ENCODE measurements at regions of chr2 and their contacts with region 1.

Region 1: DNA sequence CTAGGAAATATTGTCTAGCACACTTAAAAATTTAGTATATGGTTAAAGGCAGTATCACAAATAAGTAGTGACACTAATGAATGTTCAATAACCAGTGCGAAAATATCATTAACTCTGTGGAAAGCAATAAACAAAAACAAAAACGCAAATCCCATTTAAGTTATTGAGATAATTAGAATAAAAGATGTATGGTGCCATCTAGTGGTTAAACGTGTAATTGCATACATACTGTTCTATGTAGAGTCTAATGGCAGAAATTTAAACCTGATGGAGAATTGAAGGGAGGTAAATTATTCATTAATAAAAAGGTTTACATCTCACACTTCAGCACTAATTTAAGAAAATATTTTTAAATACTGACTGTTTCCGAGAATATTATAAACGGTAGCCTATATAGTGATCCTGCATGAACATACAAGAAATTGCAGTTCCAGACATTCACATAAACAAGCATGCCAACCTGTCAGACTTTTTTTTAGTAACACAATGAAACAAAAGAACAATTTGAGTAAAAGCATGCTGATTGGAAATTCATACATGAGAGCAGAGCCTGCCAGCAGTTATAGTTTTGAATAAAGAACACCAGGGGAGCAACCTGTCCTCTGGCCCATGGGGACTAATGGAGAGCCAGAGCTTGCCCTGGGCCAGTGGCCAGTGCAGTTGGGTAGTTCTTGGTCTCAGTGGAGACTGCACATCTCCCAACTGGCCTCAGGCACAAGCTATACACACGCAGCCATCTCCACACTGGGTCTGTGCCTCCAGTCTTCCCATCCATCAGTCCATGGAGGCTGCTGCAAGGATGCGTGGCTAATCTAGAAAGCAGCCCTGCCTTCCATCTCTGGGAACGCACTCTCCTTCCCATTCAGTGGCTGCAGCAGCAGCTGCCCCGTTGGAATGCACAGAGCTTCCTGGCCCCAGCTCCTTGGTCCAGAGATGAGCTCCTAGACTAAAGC is 28.0 kb downstream of the GCG start:
- DNase-seq: no peak
- H3K4me3 ChIP-seq: no peak overlapping the region
- H3K27me3 ChIP-seq: peaks cover 2% of the 10 kb centered on the region; the same call in 1 of the 2 replicates
- CTCF ChIP-seq: peak; percentile 51

Region 2: DNA sequence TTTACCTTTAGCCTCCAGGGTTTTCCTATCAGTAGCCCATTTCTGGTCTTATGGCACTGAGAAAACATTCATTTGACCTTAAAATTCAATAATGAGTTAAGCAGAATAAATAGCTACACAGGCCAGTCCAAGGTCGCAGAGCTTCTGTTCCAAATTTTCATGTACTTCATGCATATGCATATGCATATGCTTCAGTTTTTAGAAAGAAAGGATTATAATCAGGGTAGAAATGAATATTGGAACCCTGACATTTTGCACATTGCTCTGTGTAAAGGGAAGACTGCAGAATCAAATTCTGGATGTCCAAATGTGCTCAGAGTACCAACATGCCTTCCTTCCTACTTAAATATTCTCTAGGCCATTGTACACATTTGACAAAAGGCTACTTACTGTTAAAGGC is 154.9 kb before region 1 on chr2:
- CTCF ChIA-PET with region 1: no interaction called
- POLR2A ChIA-PET with region 1: no interaction called
- DNase-seq: no peak
- H3K4me3 ChIP-seq: no peak overlapping the region
- H3K27me3 ChIP-seq: no peaks in the 10 kb centered on the region
- CTCF ChIP-seq: no peak

Region 3: DNA sequence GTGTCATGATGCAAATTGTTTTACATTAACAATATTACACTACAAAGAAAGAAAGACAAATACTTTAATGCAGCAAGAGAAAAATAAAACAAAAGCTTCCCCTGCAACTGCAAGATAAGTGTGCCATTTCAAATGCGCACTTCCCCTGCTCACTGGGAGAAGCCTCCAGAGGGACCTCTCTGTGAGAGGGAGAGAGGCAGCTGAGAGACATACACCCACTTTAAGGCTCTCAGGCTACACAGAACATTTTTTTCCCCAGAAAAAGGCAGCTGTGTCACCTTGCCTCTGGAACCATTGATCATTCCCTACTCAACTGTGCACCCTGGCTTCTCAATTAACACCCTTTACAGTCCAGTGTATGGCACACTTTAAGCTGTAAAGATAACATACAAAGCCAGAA is 125.2 kb before region 1 on chr2:
- CTCF ChIA-PET with region 1: interaction called, 12 read pairs
- POLR2A ChIA-PET with region 1: no interaction called
- DNase-seq: no peak
- H3K4me3 ChIP-seq: no peak overlapping the region
- H3K27me3 ChIP-seq: no peaks in the 10 kb centered on the region
- CTCF ChIP-seq: no peak

Region 4: DNA sequence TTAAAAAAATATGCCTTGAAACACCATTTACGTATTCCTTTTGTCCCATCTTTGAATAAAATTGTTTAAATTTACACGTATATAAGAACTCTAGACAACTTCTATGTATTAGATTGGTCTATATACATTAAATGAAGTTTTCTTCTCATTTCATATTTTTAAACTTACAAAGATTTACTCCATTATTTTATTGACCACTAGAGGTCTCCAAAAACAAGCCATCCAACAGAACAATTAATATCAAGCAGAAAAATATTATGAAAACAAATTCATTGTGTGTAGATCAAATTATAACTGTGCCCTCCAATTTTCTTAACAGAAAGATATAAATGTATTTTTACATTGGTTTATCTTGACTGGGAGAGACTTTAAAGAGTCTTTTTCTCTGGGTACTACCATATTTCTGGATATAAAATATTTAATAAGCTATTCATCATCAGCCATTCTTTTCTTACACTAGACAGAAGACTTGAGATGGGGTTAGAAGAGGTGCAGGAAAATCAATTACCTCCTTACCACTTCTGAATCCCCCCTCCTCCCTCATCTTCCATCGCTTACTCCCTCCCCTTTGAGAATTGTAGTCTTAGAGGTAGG is 116.5 kb before region 1 on chr2:
- CTCF ChIA-PET with region 1: interaction called, 22 read pairs
- POLR2A ChIA-PET with region 1: no interaction called
- DNase-seq: no peak
- H3K4me3 ChIP-seq: no peak overlapping the region
- H3K27me3 ChIP-seq: 0 out of 2 replicates have a peak, but pooled peaks cover 1% of the 10 kb centered on the region
- CTCF ChIP-seq: peak; percentile 46

Region 5: GRCh38 chr2:162041485-162041884 is 82.6 kb before region 1 on chr2:
- CTCF ChIA-PET with region 1: no interaction called
- POLR2A ChIA-PET with region 1: no interaction called
- DNase-seq: no peak
- H3K4me3 ChIP-seq: no peak overlapping the region
- H3K27me3 ChIP-seq: no peaks in the 10 kb centered on the region
- CTCF ChIP-seq: no peak

Region 6: GRCh38 chr2:162556996-162557395 is 432.9 kb after region 1 on chr2:
- CTCF ChIA-PET with region 1: no interaction called
- POLR2A ChIA-PET with region 1: no interaction called
- DNase-seq: no peak
- H3K4me3 ChIP-seq: no peak overlapping the region
- H3K27me3 ChIP-seq: no peaks in the 10 kb centered on the region
- CTCF ChIP-seq: no peak